Stomach (tissue), 19 donors: ENCODE measurements at regions of chr9 and their contacts with region 1.

Region 1: GRCh38 chr9:25935188-25935587 is 256.9 kb upstream of the TUSC1 start:
- DNase-seq: no peak
- H3K4me3 ChIP-seq: no peak overlapping the region
- H3K27ac ChIP-seq: no peak overlapping the region
- H3K4me1 ChIP-seq: no peaks in the 10 kb centered on the region
- H3K27me3 ChIP-seq: no peaks in the 10 kb centered on the region
- CTCF ChIP-seq: no peak
- EP300 ChIP-seq: no peak
- POLR2A ChIP-seq: no peak

Region 2: DNA sequence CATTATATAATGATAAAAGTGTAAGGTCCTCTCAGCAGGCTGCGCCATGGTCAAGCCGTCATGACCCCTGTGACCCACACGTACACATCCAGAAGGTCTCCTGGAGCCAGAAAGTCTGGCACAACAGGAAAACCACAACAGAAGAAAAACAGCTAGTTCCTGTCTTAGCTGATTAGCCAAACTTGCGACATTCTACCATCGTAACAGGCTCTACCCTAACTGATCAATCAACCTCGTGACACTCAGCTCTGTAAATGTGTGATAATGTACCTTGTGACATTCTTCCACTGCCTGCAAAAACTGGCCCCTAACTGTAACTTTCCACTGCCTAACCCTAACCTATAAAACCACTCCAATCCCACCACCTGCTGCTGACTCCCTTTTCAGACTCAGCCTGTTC is 59.4 kb after region 1 on chr9:
- intact Hi-C with region 1: loop called (anchors 10 kb)
- DNase-seq: no peak
- H3K4me3 ChIP-seq: no peak overlapping the region
- H3K27ac ChIP-seq: no peak overlapping the region
- H3K4me1 ChIP-seq: no peaks in the 10 kb centered on the region
- H3K27me3 ChIP-seq: no peaks in the 10 kb centered on the region
- CTCF ChIP-seq: no peak
- EP300 ChIP-seq: no peak
- POLR2A ChIP-seq: no peak

Region 3: GRCh38 chr9:26292943-26293342 is 357.8 kb after region 1 on chr9:
- intact Hi-C with region 1: no loop called
- DNase-seq: no peak
- H3K4me3 ChIP-seq: no peak overlapping the region
- H3K27ac ChIP-seq: no peak overlapping the region
- H3K4me1 ChIP-seq: no peaks in the 10 kb centered on the region
- H3K27me3 ChIP-seq: no peaks in the 10 kb centered on the region
- CTCF ChIP-seq: no peak
- EP300 ChIP-seq: no peak
- POLR2A ChIP-seq: no peak